ENCODE measurements at regions of chr4 and their contacts with region 1.

Region 1: DNA sequence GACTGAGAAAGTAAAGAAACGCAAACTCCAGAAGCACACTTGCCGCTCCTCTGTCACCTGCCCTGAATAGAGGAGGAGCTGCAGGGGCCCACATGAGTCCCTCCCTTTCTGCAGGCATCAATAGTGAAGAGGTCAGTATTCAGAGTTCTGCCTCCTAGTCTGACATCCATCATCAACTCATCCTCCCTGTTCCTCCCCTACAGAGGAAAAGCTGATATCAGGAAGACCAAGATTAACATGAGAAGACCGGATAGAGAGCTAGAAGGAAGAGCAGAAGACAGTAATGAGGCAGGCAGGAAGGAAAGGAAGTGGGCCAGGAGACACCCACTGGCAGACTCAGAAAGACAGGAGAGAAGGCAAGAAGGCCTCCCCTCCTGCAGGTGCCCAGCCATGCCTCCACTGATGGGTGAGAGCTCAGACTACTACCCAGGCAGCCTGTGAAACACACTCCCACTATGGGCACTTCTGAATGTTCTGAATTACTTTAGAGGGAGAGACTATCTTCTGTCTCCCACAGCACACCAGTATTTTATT is 74.6 kb downstream of the CC2D2A start:
- DNase-seq: no peak
- H3K4me3 Mint-ChIP-seq: no peak overlapping the region
- H3K27ac Mint-ChIP-seq: no peak overlapping the region
- H3K4me1 Mint-ChIP-seq: no peaks in the 10 kb centered on the region
- H3K27me3 Mint-ChIP-seq: no peaks in the 10 kb centered on the region
- CTCF ChIP-seq: no peak

Region 2: DNA sequence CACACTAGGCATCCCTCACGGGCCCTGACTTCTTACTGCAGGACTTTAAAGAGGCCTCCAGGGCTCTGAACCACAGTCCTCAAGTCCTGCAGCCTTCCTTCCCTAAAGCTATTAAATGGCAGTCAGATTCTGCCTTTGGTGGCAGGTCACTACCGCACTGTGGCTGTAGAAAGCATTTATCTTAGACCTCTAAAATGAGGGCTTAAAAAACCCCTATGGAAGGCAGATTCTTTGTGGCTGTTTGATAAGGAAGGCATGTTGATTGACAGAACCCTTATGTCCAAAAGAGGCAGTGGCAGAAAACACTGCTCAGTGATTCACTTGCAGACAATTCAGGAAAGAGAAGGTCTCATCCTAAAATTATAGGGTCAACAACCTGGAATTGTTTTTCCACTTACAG is 31.7 kb after region 1 on chr4:
- CTCF ChIA-PET with region 1: no interaction called
- POLR2A ChIA-PET with region 1: no interaction called
- intact Hi-C with region 1: loop called (anchors 1 kb)
- DNase-seq: no peak
- H3K4me3 Mint-ChIP-seq: no peak overlapping the region
- H3K27ac Mint-ChIP-seq: no peak overlapping the region
- H3K4me1 Mint-ChIP-seq: no peaks in the 10 kb centered on the region
- H3K27me3 Mint-ChIP-seq: no peaks in the 10 kb centered on the region
- CTCF ChIP-seq: no peak

Measured in MCF 10A (cell line).